ENCODE measurements at regions of chr18 and their contacts with region 1.

Region 1: GRCh38 chr18:50099725-50100407 is 95.1 kb downstream of the MYO5B start:
- DNase-seq: no peak
- H3K4me3 Mint-ChIP-seq: no peak overlapping the region
- H3K27ac Mint-ChIP-seq: no peak overlapping the region
- H3K4me1 Mint-ChIP-seq: no peaks in the 10 kb centered on the region
- H3K27me3 Mint-ChIP-seq: peaks cover 15% of the 10 kb centered on the region

Region 2: DNA sequence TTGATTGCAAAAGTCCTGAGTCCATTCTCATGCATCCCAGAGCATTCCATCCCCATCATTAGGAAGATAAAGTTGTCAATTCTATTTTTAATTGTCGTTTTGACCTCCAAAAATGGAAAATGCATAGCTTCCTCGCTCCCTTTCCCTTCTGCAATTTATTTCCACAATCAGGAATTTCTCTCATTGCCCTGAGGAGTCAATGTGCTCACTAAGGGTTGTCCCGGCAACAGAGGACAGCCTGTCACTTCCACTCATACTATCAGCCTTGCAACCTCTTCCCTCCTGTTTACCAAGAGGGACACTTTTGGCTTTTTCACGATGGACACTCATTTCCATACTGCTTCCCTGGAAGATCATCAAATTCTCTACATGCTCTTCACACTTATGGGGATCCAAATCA is 69.7 kb before region 1 on chr18:
- CTCF ChIA-PET with region 1: no interaction called
- POLR2A ChIA-PET with region 1: no interaction called
- intact Hi-C with region 1: no loop called
- DNase-seq: no peak
- H3K4me3 Mint-ChIP-seq: no peak overlapping the region
- H3K27ac Mint-ChIP-seq: no peak overlapping the region
- H3K4me1 Mint-ChIP-seq: no peaks in the 10 kb centered on the region
- H3K27me3 Mint-ChIP-seq: peaks cover 15% of the 10 kb centered on the region

Region 3: DNA sequence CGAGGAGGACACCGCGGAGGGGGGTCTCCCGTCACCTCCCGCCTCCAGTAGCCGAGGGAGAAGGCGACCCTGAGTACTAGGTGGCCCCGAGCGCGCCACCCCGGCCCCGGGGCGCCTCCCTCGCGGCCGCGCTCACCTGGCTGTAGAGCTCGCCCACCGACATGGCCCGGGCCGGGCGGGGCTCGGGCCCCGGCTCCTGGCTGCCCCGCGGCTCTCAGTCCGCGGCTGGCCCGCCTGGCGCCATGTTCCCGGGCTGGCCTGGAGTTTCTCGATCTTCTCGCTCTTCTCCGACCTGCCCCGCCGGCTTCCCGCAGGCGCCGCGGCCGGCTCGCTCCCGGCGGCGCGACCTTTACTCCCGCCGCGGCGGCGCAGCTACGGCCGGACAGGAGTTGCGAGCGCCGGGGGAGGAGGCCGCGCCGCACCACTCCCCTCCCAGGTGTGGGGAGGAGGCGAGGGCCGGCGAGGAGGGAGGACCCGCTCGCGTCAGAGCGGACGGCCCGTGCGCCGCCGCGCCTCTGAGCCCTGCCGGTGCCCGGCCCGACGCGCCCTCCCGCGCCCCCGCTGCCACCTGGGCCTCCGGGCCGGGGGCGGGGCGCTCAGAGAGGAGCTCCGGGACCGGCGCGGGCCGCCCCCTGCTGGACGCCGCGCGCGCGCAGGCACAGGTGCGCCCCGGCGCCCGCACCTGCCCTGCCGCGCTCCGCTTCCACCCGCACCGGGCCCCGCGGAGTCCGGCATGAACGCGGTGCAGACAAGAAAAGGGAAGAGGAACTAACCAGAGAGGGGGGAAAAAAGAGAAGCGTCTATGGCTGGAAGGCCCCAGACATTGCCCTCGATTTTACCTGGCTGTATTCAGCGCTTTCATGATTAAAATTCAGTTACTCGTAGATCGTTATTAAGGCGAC is 95.0 kb after region 1 on chr18 and contains the start of gene MYO5B:
- CTCF ChIA-PET with region 1: no interaction called
- POLR2A ChIA-PET with region 1: no interaction called
- intact Hi-C with region 1: loop called (anchors 5 kb)
- DNase-seq: peak; percentile 63
- H3K4me3 Mint-ChIP-seq: no peak within 1 kb of the TSS
- H3K27ac Mint-ChIP-seq: no peak within 1 kb of the TSS
- H3K4me1 Mint-ChIP-seq: peaks cover 17% of the 10 kb centered on the region
- H3K27me3 Mint-ChIP-seq: peaks cover 51% of the 10 kb centered on the region
- total RNA-seq, gene MYO5B: 0.02 to 0.21 TPM

Measured in activated CD4-positive, alpha-beta memory T cell treated with anti-CD3 and anti-CD28 coated beads for 36 hours (primary cell).